Endothelial cell of umbilical vein (primary cell): ENCODE measurements at regions of chr1 and their contacts with region 1.

Region 1: GRCh38 chr1:59061876-59062275 is 235.0 kb upstream of the FGGY start:
- DNase-seq: peak; percentile 94
- H3K4me3 ChIP-seq: peak overlapping the region in 2 of 3 experiments; percentile 1 to 62
- H3K27ac ChIP-seq: peak overlapping the region; percentile 75
- H3K4me1 ChIP-seq: peaks cover 26% of the 10 kb centered on the region
- H3K27me3 ChIP-seq: no peaks in the 10 kb centered on the region
- CTCF ChIP-seq: no peak
- POLR2A ChIP-seq: peak; percentile 47

Region 2: DNA sequence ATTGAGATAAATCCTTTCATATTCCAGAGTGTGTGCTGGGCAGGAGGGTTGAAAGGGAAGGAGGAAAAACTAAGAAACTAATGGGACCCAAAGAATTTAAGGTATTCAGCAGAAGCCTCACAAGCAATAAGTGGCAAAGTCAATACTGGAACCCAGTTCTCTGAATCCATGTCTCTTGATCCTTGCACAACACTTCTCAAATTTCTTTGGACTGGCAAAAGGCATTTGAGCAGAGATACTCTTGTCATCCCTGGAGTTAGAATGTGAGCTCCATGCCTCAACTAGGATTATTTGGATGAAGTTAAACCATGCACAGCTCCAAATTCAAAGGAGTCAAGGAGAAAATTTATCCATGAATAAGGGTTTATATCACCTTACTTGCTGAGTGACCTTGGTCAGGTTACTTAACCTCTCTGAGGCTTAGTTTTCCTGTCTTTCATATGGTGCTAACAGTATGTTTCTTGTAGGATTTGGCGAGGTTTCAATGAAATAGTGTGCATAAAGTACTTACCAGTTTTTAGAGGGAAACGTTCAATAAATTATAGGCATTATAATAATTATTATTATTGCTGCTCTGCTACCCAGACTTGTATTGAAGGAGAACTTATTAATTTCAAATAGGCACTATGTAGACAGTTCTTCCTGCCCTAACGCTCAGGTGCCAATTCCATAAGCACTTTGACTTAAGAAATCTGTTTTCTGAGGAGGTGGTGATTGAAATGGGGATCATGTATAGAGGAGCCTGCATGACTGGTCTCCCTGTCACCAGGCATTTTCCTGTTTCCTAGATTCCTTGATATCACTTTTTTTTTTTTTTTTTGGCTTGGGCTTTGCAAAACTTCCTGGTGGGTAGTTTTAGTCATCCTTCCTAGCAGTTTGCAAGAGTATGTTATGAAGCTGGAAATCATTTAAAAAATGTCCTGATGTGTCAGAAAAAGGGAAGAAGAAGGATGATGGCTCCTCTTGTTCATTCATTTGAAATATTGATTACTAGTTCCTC is 153.0 kb before region 1 on chr1:
- CTCF ChIA-PET with region 1: interaction called, 3 read pairs
- POLR2A ChIA-PET with region 1: no interaction called
- dilution Hi-C with region 1: no loop called
- intact Hi-C with region 1: loop called (anchors 1 kb)
- DNase-seq: peak; percentile 89
- H3K4me3 ChIP-seq: no peak overlapping the region
- H3K27ac ChIP-seq: peak overlapping the region; percentile 64
- H3K4me1 ChIP-seq: peaks cover 35% of the 10 kb centered on the region
- H3K27me3 ChIP-seq: no peaks in the 10 kb centered on the region
- CTCF ChIP-seq: no peak
- POLR2A ChIP-seq: no peak

Region 3: GRCh38 chr1:59020151-59020997 is 41.5 kb before region 1 on chr1:
- CTCF ChIA-PET with region 1: no interaction called
- POLR2A ChIA-PET with region 1: no interaction called
- dilution Hi-C with region 1: no loop called
- intact Hi-C with region 1: loop called (anchors 2 kb)
- DNase-seq: peak; percentile 87
- H3K4me3 ChIP-seq: peak overlapping the region in 1 of 3 experiments; percentile 56
- H3K27ac ChIP-seq: peak overlapping the region; percentile 65
- H3K4me1 ChIP-seq: peaks cover 31% of the 10 kb centered on the region
- H3K27me3 ChIP-seq: no peaks in the 10 kb centered on the region
- CTCF ChIP-seq: no peak
- POLR2A ChIP-seq: no peak

Region 4: DNA sequence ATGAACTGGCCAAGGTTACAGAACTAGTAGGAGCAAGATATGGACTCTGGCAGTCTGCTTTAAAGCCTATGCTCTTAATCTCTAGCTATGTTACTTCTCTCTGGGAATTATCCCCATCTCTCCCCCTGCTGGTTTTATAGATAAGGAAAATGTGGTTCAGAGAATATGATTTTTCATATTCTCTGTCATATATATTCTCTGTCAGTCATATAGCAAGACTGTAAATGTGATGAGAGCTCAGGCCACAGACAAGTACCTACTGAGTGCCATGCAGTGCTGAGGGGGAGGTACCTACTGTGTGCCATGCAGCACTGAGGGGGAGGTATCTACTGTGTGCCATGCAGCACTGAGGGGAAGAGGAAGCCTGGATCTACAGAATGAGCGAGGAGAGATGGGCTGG is 14.7 kb after region 1 on chr1:
- CTCF ChIA-PET with region 1: interaction called, 14 read pairs
- POLR2A ChIA-PET with region 1: no interaction called
- dilution Hi-C with region 1: no loop called
- intact Hi-C with region 1: loop called (anchors 1 kb)
- DNase-seq: peak; percentile 60
- H3K4me3 ChIP-seq: no peak overlapping the region
- H3K27ac ChIP-seq: no peak overlapping the region
- H3K4me1 ChIP-seq: peaks cover 13% of the 10 kb centered on the region
- H3K27me3 ChIP-seq: no peaks in the 10 kb centered on the region
- CTCF ChIP-seq: peak in 1 of 2 donors; percentile 16
- POLR2A ChIP-seq: no peak

Region 5: DNA sequence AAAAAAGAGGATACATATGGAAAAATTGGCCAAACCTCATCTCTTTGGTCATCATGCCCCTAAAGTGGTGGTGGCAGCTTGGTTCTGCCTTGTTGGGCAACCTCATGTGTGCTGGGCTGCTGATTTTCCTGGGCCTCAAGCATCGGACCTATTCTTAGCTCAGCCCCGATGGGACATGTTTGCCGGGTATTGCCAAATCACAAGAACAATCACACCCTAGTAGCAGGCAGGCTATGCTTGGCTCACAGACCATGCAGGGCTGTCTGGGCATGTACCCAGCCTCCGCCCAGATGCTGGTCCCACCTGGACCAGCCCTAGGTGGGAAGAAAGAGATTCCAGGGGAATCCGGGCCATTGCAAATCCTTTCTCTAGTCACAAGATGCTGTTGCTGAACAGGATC is 45.6 kb after region 1 on chr1:
- CTCF ChIA-PET with region 1: no interaction called
- POLR2A ChIA-PET with region 1: no interaction called
- dilution Hi-C with region 1: no loop called
- intact Hi-C with region 1: no loop called
- DNase-seq: no peak
- H3K4me3 ChIP-seq: no peak overlapping the region
- H3K27ac ChIP-seq: no peak overlapping the region
- H3K4me1 ChIP-seq: no peaks in the 10 kb centered on the region
- H3K27me3 ChIP-seq: no peaks in the 10 kb centered on the region
- CTCF ChIP-seq: no peak
- POLR2A ChIP-seq: no peak

Region 6: DNA sequence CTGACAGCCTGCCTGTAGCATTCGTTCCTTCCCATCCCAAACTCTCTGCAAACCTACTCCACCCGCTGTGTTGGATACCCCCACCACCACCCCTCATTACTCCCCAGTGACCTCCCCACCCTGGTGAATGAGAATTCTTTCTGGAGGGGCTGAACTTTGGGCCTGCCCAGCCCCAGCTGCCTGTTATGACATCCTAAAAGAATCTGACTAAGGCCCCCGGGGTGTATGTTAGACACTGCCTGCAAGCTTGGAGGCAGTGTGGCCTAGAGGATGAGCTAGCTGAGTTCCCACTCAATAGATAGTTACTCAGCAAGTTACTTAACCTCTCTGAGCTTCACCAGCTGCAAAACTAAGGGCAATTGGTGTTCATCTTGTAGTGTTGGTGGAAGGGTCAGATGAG is 124.8 kb after region 1 on chr1:
- CTCF ChIA-PET with region 1: no interaction called
- POLR2A ChIA-PET with region 1: no interaction called
- dilution Hi-C with region 1: no loop called
- intact Hi-C with region 1: no loop called
- DNase-seq: no peak
- H3K4me3 ChIP-seq: no peak overlapping the region
- H3K27ac ChIP-seq: no peak overlapping the region
- H3K4me1 ChIP-seq: no peaks in the 10 kb centered on the region
- H3K27me3 ChIP-seq: no peaks in the 10 kb centered on the region
- CTCF ChIP-seq: no peak
- POLR2A ChIP-seq: no peak